Heart right ventricle (tissue), 16 donors: ENCODE measurements at regions of chr17 and their contacts with region 1.

Region 1: GRCh38 chr17:4304417-4305027 is 40.7 kb upstream of the ANKFY1 start:
- DNase-seq: peak in 1 of 2 donors; percentile 58
- ATAC-seq: peak in 6 of 8 donors; percentile 54 to 72 (median 65)
- H3K4me3 ChIP-seq: no peak overlapping the region
- H3K27ac ChIP-seq: no peak overlapping the region
- H3K4me1 ChIP-seq: peaks cover 0 to 52% (median 17%) of the 10 kb centered on the region in 9 donors
- H3K27me3 ChIP-seq: no peaks in the 10 kb centered on the region
- CTCF ChIP-seq: peak; percentile 37 to 85 (median 75)

Region 2: DNA sequence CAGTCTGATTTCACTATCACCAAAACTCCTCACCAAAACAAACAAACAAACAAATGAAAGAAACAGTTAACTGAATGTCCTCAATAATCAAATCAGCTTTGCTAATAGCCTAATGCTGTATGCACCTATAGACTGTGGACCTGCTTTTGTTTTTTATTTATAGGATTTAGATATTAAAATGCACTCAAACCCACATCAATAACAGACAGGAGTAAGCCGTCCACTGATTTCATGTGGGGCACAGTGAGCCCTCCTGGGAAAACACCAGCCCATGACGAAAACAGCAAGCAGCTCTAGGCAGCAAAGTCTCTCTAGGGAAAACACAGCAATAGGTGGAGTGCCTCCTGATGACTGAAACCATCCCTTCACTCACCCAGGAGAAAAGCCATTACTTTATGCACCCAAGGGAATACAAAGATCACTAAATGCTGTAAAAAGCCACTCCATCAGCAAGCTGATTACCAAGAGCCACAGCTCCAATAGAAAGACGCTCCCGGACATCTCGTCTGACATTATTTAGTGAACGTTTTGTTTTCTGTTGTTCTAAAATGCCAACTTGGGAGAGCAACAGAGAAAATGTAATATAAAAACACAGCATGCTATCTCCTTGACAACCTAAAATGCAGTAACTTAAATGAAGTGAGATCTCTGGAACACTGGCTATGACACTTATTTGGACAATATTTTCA is 88.5 kb before region 1 on chr17:
- intact Hi-C with region 1: loop called in 8 of 10 experiments (anchors 2 to 10 kb)
- DNase-seq: no peak
- ATAC-seq: peak in 2 of 8 donors; percentile 42 to 44
- H3K4me3 ChIP-seq: no peak overlapping the region
- H3K27ac ChIP-seq: peak overlapping the region in 7 of 10 donors; percentile 7 to 83 (median 60)
- H3K4me1 ChIP-seq: peaks cover 0 to 39% (median 26%) of the 10 kb centered on the region in 9 donors
- H3K27me3 ChIP-seq: no peaks in the 10 kb centered on the region
- CTCF ChIP-seq: no peak

Region 3: DNA sequence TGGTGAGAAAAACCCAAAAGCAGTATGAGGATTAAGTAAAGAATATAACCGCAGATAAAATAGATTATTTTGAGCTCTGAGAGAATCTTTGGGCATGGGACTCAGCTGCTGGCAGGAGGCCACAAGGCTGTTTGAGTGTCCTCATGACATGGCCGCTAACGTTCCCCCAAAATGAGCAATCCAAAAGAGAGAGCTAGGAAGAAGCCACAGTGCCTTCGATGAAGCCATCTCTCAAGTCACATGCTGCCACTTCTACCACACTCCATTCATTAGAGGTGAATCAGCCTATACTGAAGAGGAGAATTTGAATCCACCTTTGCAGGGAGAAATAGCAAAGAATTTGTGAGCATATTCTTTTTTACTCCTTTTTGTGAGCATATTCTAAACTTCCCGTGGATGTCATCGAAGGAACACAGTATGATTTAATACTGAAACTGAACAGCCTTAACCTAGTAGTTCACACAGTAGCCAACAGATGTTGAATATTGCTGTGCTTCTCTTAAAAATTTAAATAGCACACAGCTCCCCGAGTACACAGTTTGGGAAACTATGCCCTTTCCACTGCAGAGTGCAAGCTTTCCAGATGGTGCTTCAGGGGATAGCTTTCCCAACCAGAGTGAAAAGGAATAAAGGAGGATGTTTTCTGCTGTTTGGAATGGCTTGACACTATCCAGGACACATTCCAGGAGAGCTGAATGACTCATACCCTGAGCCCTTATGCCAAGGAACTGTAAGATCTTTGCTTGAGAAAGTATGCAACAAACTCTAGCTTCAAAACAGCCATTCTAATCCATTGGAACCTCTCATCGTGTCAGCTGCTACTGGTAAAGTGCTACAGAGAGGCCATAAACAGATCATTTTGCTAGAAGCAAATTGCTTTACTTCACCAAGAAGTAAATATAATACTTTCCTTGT is 74.6 kb before region 1 on chr17:
- intact Hi-C with region 1: loop called in 1 of 10 experiments (anchors 5 kb)
- DNase-seq: peak; percentile 44 to 58
- ATAC-seq: peak; percentile 86 to 96 (median 90)
- H3K4me3 ChIP-seq: peak overlapping the region in 3 of 10 donors; percentile 2 to 11 (median 5)
- H3K27ac ChIP-seq: peak overlapping the region; percentile 54 to 87 (median 76)
- H3K4me1 ChIP-seq: peaks cover 4 to 60% (median 41%) of the 10 kb centered on the region in 9 donors
- H3K27me3 ChIP-seq: no peaks in the 10 kb centered on the region
- CTCF ChIP-seq: no peak

Region 4: DNA sequence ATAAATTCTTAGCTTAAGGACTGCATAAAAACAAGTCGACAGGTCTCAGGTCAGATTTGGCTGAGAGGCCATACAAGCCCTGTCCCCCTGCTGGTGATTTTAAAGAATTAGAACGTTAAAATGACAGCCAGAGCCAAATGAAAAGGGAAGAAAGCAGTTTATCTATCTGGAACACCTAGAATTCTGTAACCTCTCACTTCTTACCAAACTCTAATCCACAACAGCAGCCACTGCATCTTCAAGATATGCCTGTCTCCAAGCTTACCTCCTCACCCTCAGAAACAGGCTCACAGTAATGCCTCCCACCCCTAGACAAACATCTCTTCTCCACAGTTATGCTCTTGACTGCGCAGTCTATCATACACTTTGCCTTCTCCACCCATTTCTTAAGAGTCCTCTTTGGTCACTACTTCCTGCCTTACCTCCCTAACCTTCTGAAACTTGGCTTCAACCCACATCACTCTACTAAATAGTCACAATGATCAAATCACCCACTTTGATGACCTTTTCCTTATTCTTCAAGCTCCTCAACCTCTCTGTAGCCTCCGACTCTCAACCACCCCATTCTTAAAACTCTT is 55.0 kb before region 1 on chr17:
- intact Hi-C with region 1: no loop called
- DNase-seq: no peak
- ATAC-seq: peak in 3 of 8 donors; percentile 6 to 50 (median 39)
- H3K4me3 ChIP-seq: no peak overlapping the region
- H3K27ac ChIP-seq: peak overlapping the region in 2 of 10 donors; percentile 18 to 40
- H3K4me1 ChIP-seq: peaks cover 0 to 48% (median 33%) of the 10 kb centered on the region in 9 donors
- H3K27me3 ChIP-seq: no peaks in the 10 kb centered on the region
- CTCF ChIP-seq: peak; percentile 16 to 61 (median 50)

Region 5: DNA sequence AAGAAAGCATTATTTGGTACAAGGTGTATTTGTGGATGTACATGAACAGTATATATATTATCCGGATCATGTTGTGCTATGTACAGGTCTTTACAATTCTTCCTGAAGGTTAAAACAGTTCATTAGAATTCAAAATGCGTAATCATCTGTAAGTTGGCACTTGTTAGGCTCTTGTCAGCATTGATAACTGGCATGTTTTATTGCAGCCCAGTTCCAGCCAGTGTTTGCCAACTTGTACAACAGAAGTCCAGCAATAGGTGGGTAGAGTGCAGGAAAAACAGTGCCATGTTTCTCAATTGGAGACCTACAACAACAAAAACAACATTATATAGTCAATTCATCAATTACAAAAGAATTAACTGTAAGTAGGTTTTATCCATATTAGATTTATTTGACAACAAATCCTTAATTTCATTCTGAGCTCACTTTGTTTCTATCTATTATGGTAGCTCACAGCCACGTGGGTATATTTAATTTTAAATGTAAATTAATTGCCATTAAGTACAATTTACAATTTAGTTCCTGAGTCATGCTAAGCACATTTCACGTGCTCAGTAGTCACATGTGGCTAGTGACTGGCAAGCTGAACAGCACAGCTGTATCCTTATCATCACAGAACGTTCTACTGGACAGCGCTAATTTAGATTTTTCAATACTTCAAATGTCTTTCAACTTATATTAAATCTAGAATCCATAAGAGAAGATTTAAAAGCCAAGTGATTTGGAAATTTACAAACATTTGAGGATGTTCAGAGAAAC is 32.1 kb before region 1 on chr17:
- intact Hi-C with region 1: loop called in 1 of 10 experiments (anchors 5 kb)
- DNase-seq: no peak
- ATAC-seq: peak in 7 of 8 donors; percentile 49 to 82 (median 70)
- H3K4me3 ChIP-seq: no peak overlapping the region
- H3K27ac ChIP-seq: peak overlapping the region in 8 of 10 donors; percentile 38 to 78 (median 60)
- H3K4me1 ChIP-seq: peaks cover 0 to 55% (median 18%) of the 10 kb centered on the region in 9 donors
- H3K27me3 ChIP-seq: no peaks in the 10 kb centered on the region
- CTCF ChIP-seq: no peak

Region 6: GRCh38 chr17:4354862-4355514 is 50.5 kb after region 1 on chr17:
- intact Hi-C with region 1: loop called in 3 of 10 experiments (anchors 5 to 10 kb)
- DNase-seq: no peak
- ATAC-seq: no peak
- H3K4me3 ChIP-seq: no peak overlapping the region
- H3K27ac ChIP-seq: no peak overlapping the region
- H3K4me1 ChIP-seq: peaks cover 0 to 76% (median 50%) of the 10 kb centered on the region in 9 donors
- H3K27me3 ChIP-seq: no peaks in the 10 kb centered on the region
- CTCF ChIP-seq: no peak

Region 7: DNA sequence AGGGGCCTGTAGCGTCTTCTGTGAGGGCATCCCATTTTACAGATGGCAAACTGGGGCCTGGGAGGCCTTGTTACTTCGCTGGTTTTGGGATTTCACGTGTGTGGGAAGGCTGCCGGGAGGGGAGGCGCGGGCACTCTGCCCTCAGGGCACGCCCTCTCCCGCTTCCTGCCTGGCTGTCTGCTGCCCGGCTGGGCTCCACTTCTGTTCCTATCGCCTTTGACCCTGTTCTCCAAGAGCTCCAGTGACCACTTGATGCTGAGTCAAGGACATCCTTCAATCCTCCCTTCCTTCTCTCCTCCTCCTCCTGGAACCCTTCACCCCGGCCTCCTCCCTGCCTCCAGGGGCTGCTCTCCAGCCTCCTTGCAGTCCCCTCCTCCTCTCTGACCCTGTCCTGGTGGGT is 145.2 kb after region 1 on chr17:
- intact Hi-C with region 1: no loop called
- DNase-seq: no peak
- ATAC-seq: no peak
- H3K4me3 ChIP-seq: no peak overlapping the region
- H3K27ac ChIP-seq: no peak overlapping the region
- H3K4me1 ChIP-seq: peaks cover 4 to 26% (median 14%) of the 10 kb centered on the region in 9 donors
- H3K27me3 ChIP-seq: no peaks in the 10 kb centered on the region
- CTCF ChIP-seq: no peak